Gastrocnemius medialis (tissue), 4 donors: ENCODE measurements at regions of chr18 and their contacts with region 1.

Region 1: DNA sequence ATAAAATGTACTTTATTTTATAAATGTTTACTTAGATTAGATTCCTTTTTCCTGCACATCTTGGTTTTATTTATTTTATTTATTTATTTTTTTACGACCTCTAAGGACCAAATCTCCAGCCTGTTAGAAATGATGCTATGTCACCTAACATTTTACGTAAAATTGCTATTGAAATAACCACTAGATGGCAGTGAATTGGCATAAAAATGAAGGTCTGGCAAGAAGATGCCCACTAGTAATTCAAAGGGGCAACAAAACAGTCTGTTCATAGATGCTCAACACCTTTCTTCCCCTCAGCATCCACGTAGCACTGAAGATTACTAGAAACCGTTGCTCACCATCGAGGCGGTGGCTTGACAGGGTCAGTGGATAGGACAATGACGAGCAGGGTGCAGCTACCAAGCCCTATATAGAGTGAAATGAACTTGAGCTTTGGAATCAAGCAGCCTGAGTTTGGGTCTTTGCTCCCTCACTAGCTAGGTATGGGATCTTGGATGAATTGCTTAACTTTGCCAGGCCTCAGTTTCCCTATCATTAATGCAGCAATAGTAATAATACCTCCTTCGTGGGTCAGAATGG is 128.7 kb upstream of the L3MBTL4 start:
- DNase-seq: no peak
- ATAC-seq: peak in 1 of 2 donors; percentile 39
- H3K4me3 ChIP-seq: no peak overlapping the region
- H3K27ac ChIP-seq: no peak overlapping the region
- H3K4me1 ChIP-seq: no peaks in the 10 kb centered on the region
- H3K27me3 ChIP-seq: no peaks in the 10 kb centered on the region
- CTCF ChIP-seq: peak; percentile 16 to 65 (median 44)
- POLR2A ChIP-seq: no peak

Region 2: DNA sequence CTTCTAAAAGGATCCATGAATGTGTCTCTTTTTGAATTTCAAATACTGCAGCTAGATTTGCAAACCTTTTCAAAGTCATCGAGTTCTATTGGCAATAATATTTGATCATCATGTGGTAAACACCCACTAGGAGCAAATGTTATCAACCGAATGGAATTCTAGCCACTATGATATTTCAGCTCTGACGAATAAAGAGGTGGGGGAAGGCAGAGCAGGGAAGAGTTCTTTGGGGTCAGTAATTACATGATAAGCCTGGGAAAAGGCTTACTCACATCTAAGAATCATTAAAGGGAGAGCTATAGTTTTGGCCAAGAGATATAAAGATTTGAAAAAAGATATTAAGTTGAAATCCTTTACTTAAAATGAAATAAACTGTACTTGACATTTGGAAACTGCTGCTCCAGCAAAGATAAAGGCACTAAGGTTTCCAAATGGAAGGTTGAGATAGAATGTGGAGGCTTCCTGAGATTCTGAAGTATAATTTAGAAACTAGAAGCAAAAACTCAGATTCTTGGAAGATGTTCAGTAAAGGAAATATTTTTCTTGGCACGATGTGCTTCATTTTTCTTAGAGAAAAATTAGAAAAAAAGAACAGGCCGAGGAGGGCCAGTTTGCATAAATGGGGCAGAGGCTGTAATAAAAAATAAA is 81.4 kb after region 1 on chr18:
- in situ Hi-C with region 1: loop called in 1 of 4 experiments (anchors 25 kb)
- intact Hi-C with region 1: no loop called
- DNase-seq: no peak
- ATAC-seq: no peak
- H3K4me3 ChIP-seq: no peak overlapping the region
- H3K27ac ChIP-seq: no peak overlapping the region
- H3K4me1 ChIP-seq: no peaks in the 10 kb centered on the region
- H3K27me3 ChIP-seq: no peaks in the 10 kb centered on the region
- CTCF ChIP-seq: no peak
- POLR2A ChIP-seq: no peak

Region 3: GRCh38 chr18:6781786-6782185 is 238.4 kb after region 1 on chr18:
- in situ Hi-C with region 1: no loop called
- intact Hi-C with region 1: loop called (anchors 10 kb)
- DNase-seq: peak; percentile 23 to 29
- ATAC-seq: peak; percentile 93 to 94
- H3K4me3 ChIP-seq: no peak overlapping the region
- H3K27ac ChIP-seq: peak overlapping the region; percentile 67 to 81 (median 76)
- H3K4me1 ChIP-seq: peaks cover 15% of the 10 kb centered on the region in 2 donors
- H3K27me3 ChIP-seq: no peaks in the 10 kb centered on the region
- CTCF ChIP-seq: no peak
- POLR2A ChIP-seq: no peak

Region 4: DNA sequence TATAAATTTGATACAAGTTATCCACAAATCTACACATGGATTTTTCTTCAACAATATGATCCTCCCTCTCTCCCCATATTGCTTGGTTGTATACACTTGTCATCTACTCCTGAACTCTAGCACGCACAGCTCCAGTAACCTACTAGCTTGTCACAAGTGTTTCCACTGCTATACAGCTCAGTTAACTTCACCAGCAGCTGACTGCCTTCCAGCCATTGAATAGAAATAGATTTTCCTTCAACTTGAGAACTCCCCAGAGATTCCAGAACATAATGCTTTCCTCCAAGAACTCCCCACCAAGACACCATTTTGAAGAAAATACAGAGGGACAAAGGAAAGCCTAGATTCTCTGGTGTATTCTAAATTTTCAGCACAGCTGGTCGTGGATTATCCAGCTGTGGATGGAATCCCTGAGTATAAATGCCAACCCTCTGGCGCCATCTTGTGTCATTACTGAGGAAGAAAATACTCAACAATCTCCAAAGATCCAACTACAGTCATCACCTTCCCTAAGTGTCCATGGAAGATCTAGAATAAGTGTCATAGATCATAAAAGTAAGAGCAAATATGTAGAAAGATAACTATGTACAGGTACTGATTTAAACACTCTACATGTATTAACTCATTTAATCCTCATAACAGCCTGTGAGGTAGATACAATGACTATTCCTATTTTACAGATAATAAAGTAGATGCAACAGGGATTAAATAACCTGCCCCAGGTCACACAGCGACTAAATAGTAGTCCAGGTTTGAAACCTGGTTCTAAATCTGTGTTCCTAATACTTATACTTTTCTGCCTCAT is 342.8 kb after region 1 on chr18:
- in situ Hi-C with region 1: loop called (anchors 5 to 10 kb)
- intact Hi-C with region 1: loop called (anchors 1 kb)
- DNase-seq: peak in 1 of 2 donors; percentile 15
- ATAC-seq: peak; percentile 56 to 76
- H3K4me3 ChIP-seq: no peak overlapping the region
- H3K27ac ChIP-seq: no peak overlapping the region
- H3K4me1 ChIP-seq: peaks cover 0 to 5% of the 10 kb centered on the region in 2 donors
- H3K27me3 ChIP-seq: no peaks in the 10 kb centered on the region
- CTCF ChIP-seq: peak; percentile 54 to 75 (median 70)
- POLR2A ChIP-seq: no peak

Region 5: GRCh38 chr18:6891788-6892187 is 348.4 kb after region 1 on chr18:
- in situ Hi-C with region 1: loop called in 3 of 4 experiments (anchors 5 to 10 kb)
- intact Hi-C with region 1: loop called (anchors 1 kb)
- DNase-seq: no peak
- ATAC-seq: no peak
- H3K4me3 ChIP-seq: no peak overlapping the region
- H3K27ac ChIP-seq: no peak overlapping the region
- H3K4me1 ChIP-seq: no peaks in the 10 kb centered on the region
- H3K27me3 ChIP-seq: no peaks in the 10 kb centered on the region
- CTCF ChIP-seq: no peak
- POLR2A ChIP-seq: no peak